Activated CD4-positive, alpha-beta memory T cell treated with anti-CD3 and anti-CD28 coated beads, Interleukin-2, amount 10 ng/mL, durations not matched to agents 7 days and 5 days (primary cell): ENCODE measurements at regions of chr13 and their contacts with region 1.

Region 1: GRCh38 chr13:110615322-110616102 is at the start of gene NAXD:
- DNase-seq: peak; percentile 84
- H3K4me3 Mint-ChIP-seq: peak within 1 kb of the TSS; percentile 93
- H3K27ac Mint-ChIP-seq: peak within 1 kb of the TSS; percentile 87
- H3K4me1 Mint-ChIP-seq: peaks cover 40% of the 10 kb centered on the region
- H3K27me3 Mint-ChIP-seq: no peaks in the 10 kb centered on the region
- total RNA-seq, gene NAXD: 29.6 to 30.8 TPM

Region 2: GRCh38 chr13:110593430-110594130 is 21.9 kb before region 1 on chr13:
- CTCF ChIA-PET with region 1: interaction called, 13 read pairs
- POLR2A ChIA-PET with region 1: no interaction called
- DNase-seq: no peak
- H3K4me3 Mint-ChIP-seq: no peak overlapping the region
- H3K27ac Mint-ChIP-seq: no peak overlapping the region
- H3K4me1 Mint-ChIP-seq: no peaks in the 10 kb centered on the region
- H3K27me3 Mint-ChIP-seq: peaks cover 7% of the 10 kb centered on the region

Region 3: DNA sequence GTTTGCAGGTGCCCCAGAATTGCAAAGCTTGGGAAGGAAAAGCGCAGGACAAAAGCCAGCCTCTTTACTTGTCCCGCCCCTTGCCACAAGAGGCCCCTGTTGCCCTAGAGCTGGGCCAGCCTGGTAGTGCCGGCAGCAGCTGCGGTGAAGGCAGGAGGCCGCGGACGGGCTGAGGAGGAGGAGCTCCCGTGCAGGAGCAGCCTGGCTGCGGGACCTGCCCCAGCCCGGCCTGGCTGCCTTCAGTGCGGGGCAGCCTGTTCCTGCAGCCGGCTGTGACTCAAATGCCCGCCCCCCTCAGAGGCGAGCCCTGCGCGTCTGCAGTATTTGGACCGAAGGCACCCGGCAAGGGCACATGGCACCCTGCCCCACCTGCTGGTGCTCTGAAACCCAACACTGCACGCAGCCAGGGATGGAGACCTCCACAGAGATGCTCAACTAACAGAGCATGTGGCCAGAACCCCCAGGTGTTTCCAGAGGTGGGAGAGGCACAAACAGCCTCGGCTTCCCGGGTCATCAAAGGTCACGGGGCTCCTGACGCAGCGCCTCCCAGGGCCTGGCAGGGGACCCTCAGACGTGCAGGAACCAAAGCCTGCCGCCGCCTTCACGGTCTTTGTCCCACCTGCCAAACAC is 29.5 kb after region 1 on chr13:
- CTCF ChIA-PET with region 1: no interaction called
- POLR2A ChIA-PET with region 1: interaction called, 11 read pairs
- DNase-seq: peak; percentile 64
- H3K4me3 Mint-ChIP-seq: no peak overlapping the region
- H3K27ac Mint-ChIP-seq: no peak overlapping the region
- H3K4me1 Mint-ChIP-seq: peaks cover 3% of the 10 kb centered on the region
- H3K27me3 Mint-ChIP-seq: no peaks in the 10 kb centered on the region

Region 4: GRCh38 chr13:110799246-110800236 is 184.0 kb after region 1 on chr13:
- CTCF ChIA-PET with region 1: no interaction called
- POLR2A ChIA-PET with region 1: no interaction called
- DNase-seq: no peak
- H3K4me3 Mint-ChIP-seq: no peak overlapping the region
- H3K27ac Mint-ChIP-seq: no peak overlapping the region
- H3K4me1 Mint-ChIP-seq: peaks cover 12% of the 10 kb centered on the region
- H3K27me3 Mint-ChIP-seq: peaks cover 54% of the 10 kb centered on the region

Region 5: GRCh38 chr13:110957181-110957884 is 341.8 kb after region 1 on chr13:
- CTCF ChIA-PET with region 1: no interaction called
- POLR2A ChIA-PET with region 1: no interaction called
- DNase-seq: no peak
- H3K4me3 Mint-ChIP-seq: no peak overlapping the region
- H3K27ac Mint-ChIP-seq: no peak overlapping the region
- H3K4me1 Mint-ChIP-seq: peaks cover 19% of the 10 kb centered on the region
- H3K27me3 Mint-ChIP-seq: no peaks in the 10 kb centered on the region